ENCODE measurements at regions of chr16 and their contacts with region 1.

Region 1: GRCh38 chr16:89700100-89700648 is 1.3 kb downstream of the SPATA2L start:
- DNase-seq: peak; percentile 98
- H3K4me3 Mint-ChIP-seq: peak overlapping the region; percentile 75
- H3K27ac Mint-ChIP-seq: no peak overlapping the region
- H3K4me1 Mint-ChIP-seq: peaks cover 20% of the 10 kb centered on the region
- H3K27me3 Mint-ChIP-seq: no peaks in the 10 kb centered on the region

Region 2: GRCh38 chr16:89560378-89561141 is 139.6 kb before region 1 on chr16 and contains the start of gene RPL13:
- CTCF ChIA-PET with region 1: no interaction called
- intact Hi-C with region 1: loop called (anchors 1 kb)
- DNase-seq: peak; percentile 96
- H3K4me3 Mint-ChIP-seq: peak within 1 kb of the TSS; percentile 97
- H3K27ac Mint-ChIP-seq: peak within 1 kb of the TSS; percentile 98
- H3K4me1 Mint-ChIP-seq: peaks cover 46% of the 10 kb centered on the region
- H3K27me3 Mint-ChIP-seq: no peaks in the 10 kb centered on the region
- total RNA-seq, gene RPL13: 3,875 to 3,899 TPM

Region 3: GRCh38 chr16:89711601-89712273 is 11.6 kb after region 1 on chr16:
- CTCF ChIA-PET with region 1: interaction called, 15 read pairs
- intact Hi-C with region 1: loop called (anchors 1 kb)
- DNase-seq: peak; percentile 78
- H3K4me3 Mint-ChIP-seq: peak overlapping the region; percentile 76
- H3K27ac Mint-ChIP-seq: no peak overlapping the region
- H3K4me1 Mint-ChIP-seq: peaks cover 13% of the 10 kb centered on the region
- H3K27me3 Mint-ChIP-seq: no peaks in the 10 kb centered on the region

Region 4: GRCh38 chr16:89761304-89761922 is 61.2 kb after region 1 on chr16:
- CTCF ChIA-PET with region 1: interaction called, 13 read pairs
- intact Hi-C with region 1: no loop called
- DNase-seq: no peak
- H3K4me3 Mint-ChIP-seq: peak overlapping the region; percentile 63
- H3K27ac Mint-ChIP-seq: peak overlapping the region; percentile 69
- H3K4me1 Mint-ChIP-seq: peaks cover 40% of the 10 kb centered on the region
- H3K27me3 Mint-ChIP-seq: no peaks in the 10 kb centered on the region

Region 5: GRCh38 chr16:89828199-89828778 is 128.1 kb after region 1 on chr16 and contains the start of gene SPIRE2:
- CTCF ChIA-PET with region 1: no interaction called
- intact Hi-C with region 1: no loop called
- DNase-seq: peak; percentile 80
- H3K4me3 Mint-ChIP-seq: peak within 1 kb of the TSS; percentile 52
- H3K27ac Mint-ChIP-seq: no peak within 1 kb of the TSS
- H3K4me1 Mint-ChIP-seq: peaks cover 6% of the 10 kb centered on the region
- H3K27me3 Mint-ChIP-seq: peaks cover 28% of the 10 kb centered on the region
- total RNA-seq, gene SPIRE2: 0.26 to 0.44 TPM

Region 6: DNA sequence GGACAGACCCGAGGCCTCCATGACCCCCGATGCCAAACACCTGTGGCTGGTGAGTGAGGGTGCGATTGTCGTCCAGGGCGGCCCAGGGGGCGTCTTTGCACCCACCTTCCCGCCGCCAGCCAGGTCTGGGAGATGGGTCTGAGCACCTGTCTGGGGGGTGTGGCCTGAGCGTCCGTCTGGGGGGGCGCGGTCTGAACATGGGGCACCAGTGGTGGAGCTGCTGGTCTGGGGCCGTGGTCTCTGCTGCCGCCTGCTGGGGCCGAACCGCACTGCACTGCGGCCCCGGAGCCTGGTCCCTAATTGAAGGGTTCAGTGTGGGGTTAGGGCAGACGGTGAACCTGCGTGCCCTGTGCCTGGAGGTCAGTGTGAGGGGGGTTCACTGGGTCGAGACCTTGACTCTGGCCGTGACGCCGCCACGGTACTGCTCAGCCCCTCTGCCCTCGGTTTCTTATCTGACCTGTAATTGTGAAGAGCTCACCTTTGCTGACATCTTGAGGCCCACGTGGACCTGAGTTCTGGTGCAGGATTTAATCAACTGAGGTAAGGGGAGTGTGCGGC is 160.7 kb after region 1 on chr16:
- CTCF ChIA-PET with region 1: interaction called, 66 read pairs
- intact Hi-C with region 1: loop called (anchors 1 kb)
- DNase-seq: peak; percentile 76
- H3K4me3 Mint-ChIP-seq: no peak overlapping the region
- H3K27ac Mint-ChIP-seq: no peak overlapping the region
- H3K4me1 Mint-ChIP-seq: peaks cover 28% of the 10 kb centered on the region
- H3K27me3 Mint-ChIP-seq: no peaks in the 10 kb centered on the region

Region 7: GRCh38 chr16:89999831-90000574 is 299.8 kb after region 1 on chr16:
- CTCF ChIA-PET with region 1: no interaction called
- intact Hi-C with region 1: loop called (anchors 5 kb)
- DNase-seq: no peak
- H3K4me3 Mint-ChIP-seq: no peak overlapping the region
- H3K27ac Mint-ChIP-seq: no peak overlapping the region
- H3K4me1 Mint-ChIP-seq: peaks cover 8% of the 10 kb centered on the region
- H3K27me3 Mint-ChIP-seq: no peaks in the 10 kb centered on the region

Measured in activated naive CD4-positive, alpha-beta T cell treated with anti-CD3 and anti-CD28 coated beads for 36 hours (primary cell).